HEK293T (cell line): ENCODE measurements at regions of chr7 and their contacts with region 1.

Region 1: DNA sequence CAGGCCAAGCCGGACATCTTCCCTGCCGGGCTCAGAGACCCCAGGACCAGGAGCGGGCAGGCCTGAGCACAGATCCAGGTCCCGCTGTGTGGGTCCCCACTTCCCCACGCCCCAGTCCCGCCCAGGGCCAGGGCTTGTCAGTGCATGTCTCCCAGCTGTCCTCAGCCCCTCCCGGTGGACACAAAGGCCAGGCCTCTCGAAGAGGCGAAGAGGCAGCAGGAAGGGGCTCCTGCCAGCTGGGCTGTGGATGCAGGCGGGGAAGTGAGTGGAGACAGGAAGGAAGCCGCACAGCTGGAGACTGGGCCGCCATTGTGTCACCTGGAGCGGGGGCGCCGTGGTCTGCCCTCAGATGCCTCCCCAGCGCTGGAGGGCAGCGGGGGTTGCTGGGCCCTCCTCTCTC is 4.8 kb downstream of the GRIFIN start:
- DNase-seq: no peak

Region 2: DNA sequence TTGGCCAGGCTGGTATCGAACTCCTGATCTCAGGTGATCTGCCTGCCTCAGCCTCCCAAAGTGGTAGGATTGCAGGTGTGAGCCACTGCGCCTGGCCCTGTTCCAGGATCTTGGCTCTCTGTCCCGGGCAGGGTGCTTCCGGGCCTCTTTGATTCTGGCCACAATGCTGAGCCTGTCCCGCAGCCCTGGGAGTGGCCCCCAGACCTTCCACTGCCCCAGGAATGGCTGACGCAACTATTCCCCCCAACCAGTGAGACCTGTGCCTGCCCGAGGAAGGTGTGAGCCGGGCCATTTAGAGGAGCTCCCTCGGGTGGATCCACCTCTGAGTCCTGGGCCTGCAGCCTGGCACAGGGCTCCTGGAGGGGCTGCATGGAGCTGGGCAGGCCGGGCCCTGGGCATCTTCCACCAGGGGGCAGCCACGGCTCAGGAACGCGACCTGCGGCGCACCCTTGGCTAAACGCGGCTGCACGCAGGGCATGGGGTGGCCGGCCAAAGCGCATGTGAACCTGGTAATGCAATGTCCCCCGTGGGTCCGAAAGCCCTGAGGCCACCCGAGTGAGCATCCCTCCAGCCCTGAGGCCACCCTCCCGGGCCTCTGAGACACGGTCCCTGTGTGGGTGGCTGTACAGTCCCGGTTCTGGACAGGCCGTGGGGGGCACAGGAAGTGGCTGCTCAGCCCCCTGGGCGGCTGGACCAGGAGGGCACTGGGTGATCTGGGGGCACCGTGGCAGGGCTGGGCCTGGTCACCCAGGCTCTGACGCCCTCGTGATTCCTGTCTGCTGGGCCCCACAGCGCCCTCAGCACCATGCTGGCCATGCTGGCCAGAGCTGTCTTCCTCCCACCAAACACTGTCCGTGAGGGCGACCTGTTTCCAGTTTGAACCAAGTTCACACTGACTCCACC is 20.0 kb before region 1 on chr7:
- CTCF ChIA-PET with region 1: interaction called, 79 read pairs
- POLR2A ChIA-PET with region 1: interaction called, 9 read pairs
- DNase-seq: peak; percentile 84

Region 3: DNA sequence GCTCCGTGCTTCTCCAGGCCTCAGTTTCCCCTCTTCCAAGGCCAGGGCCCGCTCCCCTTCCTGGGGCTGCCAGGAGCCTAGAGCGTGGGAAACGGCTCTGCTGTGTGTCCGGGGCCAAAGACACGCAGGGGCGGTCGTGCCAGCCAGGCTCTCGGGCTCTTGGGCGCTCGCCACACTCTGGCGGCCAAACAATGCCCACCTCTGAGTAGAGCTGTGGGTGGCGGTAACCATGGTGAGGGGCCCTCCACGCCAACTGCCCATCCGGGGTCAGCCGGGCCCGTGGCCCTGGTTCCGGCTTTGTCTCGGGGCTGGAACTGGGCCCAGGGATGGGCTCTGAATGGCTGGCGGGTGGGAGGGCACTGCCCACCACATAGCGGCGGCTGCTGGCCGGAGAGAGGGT is 11.2 kb before region 1 on chr7:
- CTCF ChIA-PET with region 1: interaction called, 11 read pairs
- POLR2A ChIA-PET with region 1: no interaction called
- DNase-seq: no peak